ENCODE measurements at regions of chr2 and their contacts with region 1.

Region 1: DNA sequence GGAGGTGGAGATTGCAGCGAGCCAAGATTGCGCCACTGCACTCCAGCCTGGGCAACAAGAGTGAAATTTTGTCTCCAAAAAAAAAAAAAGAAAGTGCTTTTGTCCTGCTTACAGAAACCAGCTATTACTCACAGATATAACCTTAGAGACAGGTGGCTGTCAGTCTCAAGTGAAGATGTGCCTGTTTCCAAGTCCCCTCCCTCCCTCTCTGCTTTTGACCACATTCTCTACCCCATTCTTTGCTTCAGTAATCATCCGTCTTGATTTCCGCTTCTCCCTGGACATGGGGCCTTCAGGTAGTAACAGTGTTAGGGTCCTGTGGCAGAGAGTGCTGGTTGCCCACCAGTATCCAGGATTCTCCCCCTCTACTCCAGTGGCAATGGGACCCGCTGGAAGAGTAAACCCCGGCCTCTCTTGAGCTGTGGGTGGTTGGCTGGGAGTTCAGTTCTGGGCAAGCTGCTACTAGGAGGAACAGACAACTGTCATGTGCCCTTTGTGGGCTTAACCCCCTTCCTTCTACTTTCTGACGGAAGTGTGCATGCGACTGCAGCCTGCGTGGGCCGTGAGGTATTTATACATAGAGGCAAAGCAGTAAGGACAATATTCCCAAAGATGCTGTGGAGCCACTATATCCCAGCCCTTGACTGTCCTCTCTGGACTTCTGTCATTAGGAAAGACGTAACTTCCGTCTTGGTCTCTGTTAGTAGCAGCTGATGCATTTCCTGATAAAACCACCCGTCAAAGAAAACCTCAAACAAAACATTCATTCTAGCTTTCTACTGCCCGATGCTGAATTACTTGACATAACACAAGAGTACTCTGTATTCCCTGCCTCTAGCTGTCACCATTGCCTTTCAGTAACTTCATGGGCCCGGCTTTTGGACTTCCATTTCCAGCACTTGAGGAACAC is 17.8 kb downstream of the PDCL3 start:
- DNase-seq: peak in 1 of 2 donors; percentile 19
- ATAC-seq: no peak
- H3K4me3 ChIP-seq: no peak overlapping the region
- H3K27ac ChIP-seq: no peak overlapping the region
- H3K4me1 ChIP-seq: no peaks in the 10 kb centered on the region
- H3K27me3 ChIP-seq: no peaks in the 10 kb centered on the region
- CTCF ChIP-seq: no peak
- POLR2A ChIP-seq: no peak

Region 2: DNA sequence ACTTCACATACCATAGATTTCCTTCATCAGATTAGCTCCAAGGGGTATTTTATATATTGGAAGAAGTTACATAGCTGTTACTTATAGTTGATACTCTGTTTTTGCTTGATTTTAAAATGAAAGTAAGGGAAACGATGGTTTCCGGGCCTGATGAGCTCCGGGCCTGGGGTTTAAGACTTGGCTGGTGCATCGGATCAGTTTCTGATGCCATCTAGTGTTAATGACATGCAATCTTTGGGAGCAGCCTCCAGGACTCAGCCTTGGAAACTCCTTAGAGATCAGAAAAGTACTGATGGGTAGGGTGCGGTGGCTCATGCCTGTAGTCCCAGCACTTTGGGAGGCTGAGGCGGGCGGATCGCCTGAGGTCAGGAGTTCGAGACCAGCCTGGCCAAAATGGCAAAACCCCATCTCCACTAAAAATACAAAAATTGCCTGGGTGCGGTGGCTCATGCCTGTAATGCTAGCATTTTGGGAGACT is 624.9 kb after region 1 on chr2:
- in situ Hi-C with region 1: loop called in 1 of 4 experiments (anchors 25 kb)
- intact Hi-C with region 1: no loop called
- DNase-seq: peak; percentile 24 to 38
- ATAC-seq: peak; percentile 88 to 91
- H3K4me3 ChIP-seq: peak overlapping the region; percentile 13 to 49 (median 29)
- H3K27ac ChIP-seq: no peak overlapping the region
- H3K4me1 ChIP-seq: peaks cover 0 to 3% of the 10 kb centered on the region in 2 donors
- H3K27me3 ChIP-seq: no peaks in the 10 kb centered on the region
- CTCF ChIP-seq: peak in 4 of 5 experiments; percentile 11 to 54 (median 43)
- POLR2A ChIP-seq: no peak